Activated T-helper 1 cell treated with anti-CD3 and anti-CD28 coated beads, Interleukin-12 subunit alpha, Interleukin-12 subunit beta, Interleukin-2, Interleukin-4 antibody, amounts not matched to agents 30 ng/mL and 10 ng/mL and 1 ng/mL, durations not matched to agents 14 hours and 24 hours and 36 hours (primary cell): ENCODE measurements at regions of chr15 and their contacts with region 1.

Region 1: DNA sequence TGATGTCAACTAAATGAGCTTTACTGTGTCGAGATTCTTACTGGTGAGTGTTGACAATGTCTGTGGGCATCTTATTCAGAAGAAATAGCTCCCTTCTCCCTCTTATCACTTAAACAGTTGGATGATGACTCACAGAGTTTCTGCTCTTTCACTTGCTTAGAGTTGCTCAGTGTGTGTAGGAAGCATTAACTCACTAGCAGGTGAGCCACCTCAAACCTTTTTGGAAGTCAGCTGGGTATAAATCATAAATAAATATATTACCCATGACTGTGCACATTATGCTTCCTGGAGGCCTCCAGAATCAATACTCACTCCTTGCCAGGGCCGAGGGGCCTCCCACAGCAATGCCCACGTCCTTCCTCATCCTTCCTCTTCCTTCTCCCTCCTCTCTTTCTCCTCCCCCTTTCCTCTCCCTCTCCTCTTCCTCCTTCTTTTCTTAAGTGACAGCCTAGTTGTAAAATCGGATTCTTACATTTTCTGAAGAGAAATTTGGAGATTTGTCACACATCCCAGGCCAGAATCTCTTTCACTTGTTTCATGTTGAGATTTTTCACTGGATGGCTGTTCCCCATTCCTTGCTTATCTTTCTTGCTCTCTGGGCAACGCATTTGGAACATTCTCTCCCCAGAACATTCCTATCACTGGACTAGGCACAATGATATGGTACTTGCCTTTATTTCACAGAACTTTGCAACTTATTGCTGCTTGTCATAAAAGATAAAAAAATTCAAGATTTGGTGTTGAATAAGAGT is 17.5 kb downstream of the SHC4 start:
- DNase-seq: no peak
- H3K4me3 Mint-ChIP-seq: no peak overlapping the region
- H3K27ac Mint-ChIP-seq: peak overlapping the region; percentile 82
- H3K4me1 Mint-ChIP-seq: peaks cover 57% of the 10 kb centered on the region
- H3K27me3 Mint-ChIP-seq: no peaks in the 10 kb centered on the region

Region 2: DNA sequence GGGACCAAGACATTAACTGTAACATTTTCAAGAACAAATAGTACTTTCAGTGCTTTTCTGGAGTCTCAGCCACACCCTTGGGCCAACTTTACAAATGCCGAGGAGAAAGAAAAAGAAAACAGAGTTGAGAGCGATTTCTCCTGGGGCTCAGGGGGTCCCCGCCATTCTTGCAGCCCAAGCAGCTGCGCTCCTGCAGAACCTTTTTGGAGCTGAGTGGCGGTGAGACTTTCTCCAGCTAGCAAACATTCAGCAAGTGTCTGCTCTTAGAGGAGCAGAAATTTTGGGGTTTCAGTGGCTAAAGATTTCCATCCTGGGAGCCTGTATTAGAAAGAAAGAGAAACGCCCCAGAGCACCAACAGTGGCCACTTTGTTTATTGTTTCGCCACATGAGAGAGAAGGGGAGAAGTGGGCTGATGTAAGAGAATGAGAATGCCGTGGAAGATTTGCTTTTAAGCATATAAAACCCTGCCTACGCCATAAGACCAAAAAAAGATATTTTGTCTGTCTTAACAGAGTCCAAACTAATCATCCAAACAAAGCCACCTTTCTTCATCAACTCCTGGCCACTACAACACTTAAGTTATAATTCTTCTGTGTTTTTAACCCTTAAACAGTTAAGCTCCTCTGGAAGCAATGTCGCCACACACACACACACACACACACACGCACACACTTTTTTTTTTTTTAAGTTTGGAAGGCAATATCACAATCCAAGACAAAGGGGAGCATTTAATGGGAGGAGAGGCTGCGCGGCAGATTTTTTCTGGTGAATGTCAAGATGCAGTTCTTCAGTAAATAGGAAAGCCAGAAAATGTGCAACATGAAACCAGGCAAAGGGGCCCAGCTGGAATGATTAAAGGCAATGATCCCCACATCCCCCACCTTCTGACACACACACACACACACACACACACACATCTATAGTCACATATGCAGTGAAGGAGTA is 49.1 kb before region 1 on chr15:
- intact Hi-C with region 1: loop called (anchors 5 kb)
- DNase-seq: no peak
- H3K4me3 Mint-ChIP-seq: peak overlapping the region; percentile 35
- H3K27ac Mint-ChIP-seq: peak overlapping the region; percentile 74
- H3K4me1 Mint-ChIP-seq: peaks cover 33% of the 10 kb centered on the region
- H3K27me3 Mint-ChIP-seq: peaks cover 5% of the 10 kb centered on the region

Region 3: GRCh38 chr15:48963524-48964113 is 17.4 kb after region 1 on chr15 and contains the start of gene SHC4:
- intact Hi-C with region 1: loop called (anchors 1 kb)
- DNase-seq: no peak
- H3K4me3 Mint-ChIP-seq: peak within 1 kb of the TSS; percentile 84
- H3K27ac Mint-ChIP-seq: peak within 1 kb of the TSS; percentile 82
- H3K4me1 Mint-ChIP-seq: peaks cover 64% of the 10 kb centered on the region
- H3K27me3 Mint-ChIP-seq: peaks cover 11% of the 10 kb centered on the region
- total RNA-seq, gene SHC4: 25.7 and 26.4 TPM in 2 replicates